Lower leg skin (tissue), 4 donors: ENCODE measurements at regions of chr1 and their contacts with region 1.

Region 1: DNA sequence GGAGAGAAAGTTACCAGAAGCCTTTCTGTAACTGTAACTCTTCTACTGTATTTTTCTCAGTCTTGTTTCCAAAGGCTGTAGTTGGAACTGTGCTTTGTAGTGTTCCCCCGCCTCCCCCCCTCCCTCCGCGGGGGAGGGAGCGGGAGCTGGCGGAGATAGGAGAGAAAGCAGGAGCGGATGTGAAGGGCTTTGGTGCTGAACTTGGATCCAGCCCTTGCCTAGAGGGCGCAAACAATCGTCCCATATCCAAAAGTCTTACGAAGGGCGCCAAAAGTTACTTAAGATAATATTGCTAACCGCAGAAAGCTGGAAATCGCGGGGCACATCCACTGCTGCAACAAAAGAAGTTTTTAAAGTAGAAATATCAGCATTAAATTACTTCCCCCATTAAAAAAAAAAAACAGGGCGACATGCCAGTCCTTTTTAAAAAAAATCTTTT is 2.4 kb upstream of the NFIA start:
- DNase-seq: peak; percentile 86 to 94
- H3K4me3 ChIP-seq: no peak overlapping the region
- CTCF ChIP-seq: no peak
- POLR2A ChIP-seq: no peak

Region 2: GRCh38 chr1:60716472-60716871 is 363.4 kb before region 1 on chr1:
- intact Hi-C with region 1: no loop called
- DNase-seq: no peak
- H3K4me3 ChIP-seq: no peak overlapping the region
- CTCF ChIP-seq: no peak
- POLR2A ChIP-seq: no peak

Region 3: DNA sequence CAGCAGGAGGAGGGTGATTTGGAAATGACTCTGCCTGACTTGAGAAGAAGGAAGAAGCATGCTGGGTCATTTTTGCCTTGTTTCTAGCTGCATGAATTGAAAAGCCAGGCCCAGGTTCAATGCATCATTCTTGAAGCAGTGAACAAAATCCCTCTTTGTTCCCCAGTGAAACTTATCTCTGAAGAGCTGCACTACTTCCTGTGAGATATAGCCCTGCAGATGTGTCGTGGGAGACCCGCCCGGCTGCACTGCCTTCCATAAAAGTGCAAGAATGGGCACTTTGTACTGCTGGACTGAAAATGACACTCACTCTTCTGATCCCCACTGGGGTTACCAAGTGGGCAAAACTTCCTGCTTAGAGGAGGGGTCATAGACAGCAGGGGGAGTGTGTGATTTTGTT is 246.7 kb before region 1 on chr1:
- intact Hi-C with region 1: no loop called
- DNase-seq: no peak
- H3K4me3 ChIP-seq: no peak overlapping the region
- CTCF ChIP-seq: no peak
- POLR2A ChIP-seq: no peak

Region 4: GRCh38 chr1:61190618-61191432 is 110.9 kb after region 1 on chr1:
- intact Hi-C with region 1: loop called (anchors 10 kb)
- DNase-seq: no peak
- H3K4me3 ChIP-seq: no peak overlapping the region
- CTCF ChIP-seq: no peak
- POLR2A ChIP-seq: no peak